Naive thymus-derived CD8-positive, alpha-beta T cell (primary cell): ENCODE measurements at regions of chr11 and their contacts with region 1.

Region 1: GRCh38 chr11:67482825-67483798 is at the start of gene AIP:
- DNase-seq: peak; percentile 90 to 99 (median 97)
- ATAC-seq: peak; percentile 75 to 78
- H3K4me3 Mint-ChIP-seq: peak within 1 kb of the TSS; percentile 86 to 100 (median 98)
- H3K27ac Mint-ChIP-seq: peak within 1 kb of the TSS; percentile 96 to 100 (median 99)
- H3K4me1 Mint-ChIP-seq: peaks cover 29 to 56% (median 53%) of the 10 kb centered on the region in 4 donors
- H3K27me3 Mint-ChIP-seq: no peaks in the 10 kb centered on the region
- polyA plus RNA-seq, gene AIP: 146 to 169 (median 146) TPM

Region 2: GRCh38 chr11:67345920-67346799 is 137.0 kb before region 1 on chr11:
- POLR2A ChIA-PET with region 1: interaction called, 29 read pairs
- DNase-seq: peak in 3 of 10 donors; percentile 29 to 57 (median 47)
- ATAC-seq: peak; percentile 58 to 74
- H3K4me3 Mint-ChIP-seq: peak overlapping the region in 8 of 10 donors; percentile 12 to 76 (median 66)
- H3K27ac Mint-ChIP-seq: peak overlapping the region in 9 of 10 donors; percentile 89 to 99 (median 94)
- H3K4me1 Mint-ChIP-seq: peaks cover 29 to 65% (median 61%) of the 10 kb centered on the region in 4 donors
- H3K27me3 Mint-ChIP-seq: no peaks in the 10 kb centered on the region

Region 3: GRCh38 chr11:67401495-67402191 is 81.5 kb before region 1 on chr11 and contains the start of gene PPP1CA:
- POLR2A ChIA-PET with region 1: interaction called, 145 read pairs
- DNase-seq: peak; percentile 82 to 98 (median 93)
- ATAC-seq: peak; percentile 62 to 71
- H3K4me3 Mint-ChIP-seq: peak within 1 kb of the TSS; percentile 87 to 99 (median 97)
- H3K27ac Mint-ChIP-seq: peak within 1 kb of the TSS; percentile 85 to 96 (median 93)
- H3K4me1 Mint-ChIP-seq: peaks cover 18 to 79% (median 62%) of the 10 kb centered on the region in 4 donors
- H3K27me3 Mint-ChIP-seq: no peaks in the 10 kb centered on the region
- polyA plus RNA-seq, gene PPP1CA: 357 to 518 (median 403) TPM

Region 4: GRCh38 chr11:67420646-67421420 is 62.3 kb before region 1 on chr11:
- POLR2A ChIA-PET with region 1: interaction called, 82 read pairs
- DNase-seq: peak; percentile 97 to 100 (median 99)
- ATAC-seq: peak; percentile 64 to 76
- H3K4me3 Mint-ChIP-seq: peak overlapping the region; percentile 76 to 94 (median 86)
- H3K27ac Mint-ChIP-seq: peak overlapping the region; percentile 80 to 100 (median 93)
- H3K4me1 Mint-ChIP-seq: peaks cover 23 to 67% (median 58%) of the 10 kb centered on the region in 4 donors
- H3K27me3 Mint-ChIP-seq: no peaks in the 10 kb centered on the region

Region 5: GRCh38 chr11:67507864-67508485 is 24.9 kb after region 1 on chr11 and contains the start of gene CDK2AP2:
- POLR2A ChIA-PET with region 1: interaction called, 118 read pairs
- DNase-seq: peak in 9 of 10 donors; percentile 92 to 99 (median 96)
- ATAC-seq: peak; percentile 74
- H3K4me3 Mint-ChIP-seq: peak within 1 kb of the TSS; percentile 81 to 94 (median 92)
- H3K27ac Mint-ChIP-seq: peak within 1 kb of the TSS; percentile 83 to 99 (median 97)
- H3K4me1 Mint-ChIP-seq: peaks cover 26 to 47% (median 39%) of the 10 kb centered on the region in 4 donors
- H3K27me3 Mint-ChIP-seq: peaks cover 0 to 5% (median under 1%) of the 10 kb centered on the region in 5 donors
- polyA plus RNA-seq, gene CDK2AP2: 75.9 to 96.8 (median 79.5) TPM